ENCODE measurements at regions of chr1 and their contacts with region 1.

Region 1: GRCh38 chr1:10253755-10254154 is 43.4 kb downstream of the KIF1B start:
- DNase-seq: no peak
- ATAC-seq: peak; percentile 81
- H3K4me3 ChIP-seq: no peak overlapping the region
- H3K27ac ChIP-seq: no peak overlapping the region
- H3K4me1 ChIP-seq: peaks cover 2 to 9% of the 10 kb centered on the region in 2 donors
- H3K27me3 ChIP-seq: no peaks in the 10 kb centered on the region

Region 2: GRCh38 chr1:10217748-10218441 is 35.9 kb before region 1 on chr1:
- intact Hi-C with region 1: loop called in 1 of 2 experiments (anchors 5 kb)
- DNase-seq: no peak
- ATAC-seq: no peak
- H3K4me3 ChIP-seq: no peak overlapping the region
- H3K27ac ChIP-seq: peak overlapping the region in 1 of 2 donors; percentile 57
- H3K4me1 ChIP-seq: peaks cover 6 to 11% of the 10 kb centered on the region in 2 donors
- H3K27me3 ChIP-seq: no peaks in the 10 kb centered on the region

Measured in aorta (tissue), 5 donors.